AG04450 (cell line): ENCODE measurements at regions of chr12 and their contacts with region 1.

Region 1: DNA sequence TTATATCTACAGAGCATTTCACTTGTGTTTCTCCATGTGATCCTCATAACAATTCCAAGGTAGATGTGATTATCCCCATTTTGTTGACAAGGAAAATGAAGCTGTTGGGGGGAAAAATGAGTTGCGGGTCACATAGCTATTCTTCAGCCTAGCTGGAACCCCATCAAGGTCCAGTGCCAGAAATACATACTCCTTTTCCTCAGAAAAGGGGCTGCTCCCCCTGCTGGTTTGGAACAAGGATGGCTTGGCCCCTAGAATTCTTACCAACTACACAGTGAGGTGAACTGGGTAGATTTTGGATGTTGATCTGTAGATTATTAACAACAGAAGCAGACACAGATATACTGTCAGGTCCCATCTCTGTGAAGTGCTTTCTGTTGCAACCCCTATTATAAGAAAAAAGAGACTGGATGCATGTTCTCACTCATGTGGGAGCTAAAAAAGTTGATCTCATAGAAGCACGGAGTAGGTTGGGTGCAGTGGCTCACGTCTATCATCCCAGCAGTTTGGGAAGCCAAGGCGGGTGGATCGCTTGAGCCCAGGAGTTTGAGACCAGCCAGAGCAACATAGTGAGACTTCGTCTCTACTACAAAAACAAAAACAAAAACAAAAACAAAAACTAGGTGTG is 8.9 kb downstream of the IKZF4 start:
- DNase-seq: no peak
- H3K4me3 ChIP-seq: no peak overlapping the region
- H3K27ac ChIP-seq: no peak overlapping the region
- H3K27me3 ChIP-seq: no peaks in the 10 kb centered on the region
- CTCF ChIP-seq: peak; percentile 89

Region 2: DNA sequence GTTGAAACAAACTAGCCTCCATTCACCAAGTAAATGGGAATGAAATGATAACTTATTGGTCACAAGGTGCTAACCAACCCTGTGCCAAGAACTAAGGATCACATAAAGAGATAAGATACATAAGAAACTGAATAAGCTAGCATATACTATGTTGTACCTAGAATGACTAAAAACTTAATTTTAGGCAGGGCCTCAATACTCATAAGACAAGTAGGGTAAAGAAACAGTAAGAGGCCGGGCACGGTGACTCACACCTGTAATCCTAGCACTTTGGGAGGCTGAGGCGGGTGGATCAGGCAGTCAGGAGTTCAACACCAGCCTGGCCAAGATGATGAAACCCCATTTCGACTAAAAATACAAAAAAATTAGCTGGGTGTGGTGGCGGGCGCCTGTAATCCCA is 269.1 kb before region 1 on chr12:
- CTCF ChIA-PET with region 1: no interaction called
- POLR2A ChIA-PET with region 1: no interaction called
- DNase-seq: no peak
- H3K4me3 ChIP-seq: no peak overlapping the region
- H3K27ac ChIP-seq: no peak overlapping the region
- H3K27me3 ChIP-seq: no peaks in the 10 kb centered on the region
- CTCF ChIP-seq: no peak

Region 3: GRCh38 chr12:55780685-55781084 is 249.1 kb before region 1 on chr12:
- CTCF ChIA-PET with region 1: no interaction called
- POLR2A ChIA-PET with region 1: no interaction called
- DNase-seq: peak; percentile 7
- H3K4me3 ChIP-seq: no peak overlapping the region
- H3K27ac ChIP-seq: no peak overlapping the region
- H3K27me3 ChIP-seq: no peaks in the 10 kb centered on the region
- CTCF ChIP-seq: no peak

Region 4: GRCh38 chr12:55973598-55974307 is 56.0 kb before region 1 on chr12 and contains the start of gene RAB5B:
- CTCF ChIA-PET with region 1: interaction called, 14 read pairs
- POLR2A ChIA-PET with region 1: no interaction called
- DNase-seq: peak; percentile 100
- H3K4me3 ChIP-seq: peak within 1 kb of the TSS; percentile 94
- H3K27ac ChIP-seq: peak within 1 kb of the TSS; percentile 87
- H3K27me3 ChIP-seq: no peaks in the 10 kb centered on the region
- CTCF ChIP-seq: peak; percentile 29; the same call in 1 of the 2 replicates
- polyA plus RNA-seq, gene RAB5B: 136 and 157 TPM in 2 replicates

Region 5: DNA sequence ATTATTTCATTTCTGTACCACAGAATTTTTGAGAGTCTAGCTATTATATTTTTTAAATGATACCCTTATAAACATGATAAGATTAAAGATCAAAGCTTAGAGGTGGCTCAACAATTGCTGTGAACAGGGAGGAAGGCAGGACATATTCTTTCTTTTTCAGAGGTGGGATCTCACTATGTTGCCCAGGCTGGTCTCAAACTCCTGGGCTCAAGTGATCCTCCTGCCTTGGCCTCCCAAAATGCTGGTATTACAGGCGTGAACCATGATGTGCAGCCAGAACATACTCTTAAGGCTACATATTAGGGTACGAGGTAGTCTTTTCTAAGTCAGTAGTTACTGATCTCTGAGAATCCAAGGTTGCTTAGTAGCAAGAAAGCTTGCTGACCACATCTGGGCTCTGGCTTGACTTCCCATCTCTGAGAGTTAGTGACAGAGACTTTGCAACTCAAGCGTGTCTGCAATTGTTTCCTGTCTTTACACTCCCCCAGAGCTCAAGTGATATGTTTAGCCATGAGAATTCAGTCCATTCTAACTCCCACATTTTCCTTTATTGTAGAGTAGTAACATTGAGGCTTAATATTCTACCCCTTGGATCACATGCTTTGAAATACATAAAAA is 47.4 kb before region 1 on chr12:
- CTCF ChIA-PET with region 1: interaction called, 25 read pairs
- POLR2A ChIA-PET with region 1: no interaction called
- DNase-seq: no peak
- H3K4me3 ChIP-seq: no peak overlapping the region
- H3K27ac ChIP-seq: no peak overlapping the region
- H3K27me3 ChIP-seq: no peaks in the 10 kb centered on the region
- CTCF ChIP-seq: no peak

Region 6: DNA sequence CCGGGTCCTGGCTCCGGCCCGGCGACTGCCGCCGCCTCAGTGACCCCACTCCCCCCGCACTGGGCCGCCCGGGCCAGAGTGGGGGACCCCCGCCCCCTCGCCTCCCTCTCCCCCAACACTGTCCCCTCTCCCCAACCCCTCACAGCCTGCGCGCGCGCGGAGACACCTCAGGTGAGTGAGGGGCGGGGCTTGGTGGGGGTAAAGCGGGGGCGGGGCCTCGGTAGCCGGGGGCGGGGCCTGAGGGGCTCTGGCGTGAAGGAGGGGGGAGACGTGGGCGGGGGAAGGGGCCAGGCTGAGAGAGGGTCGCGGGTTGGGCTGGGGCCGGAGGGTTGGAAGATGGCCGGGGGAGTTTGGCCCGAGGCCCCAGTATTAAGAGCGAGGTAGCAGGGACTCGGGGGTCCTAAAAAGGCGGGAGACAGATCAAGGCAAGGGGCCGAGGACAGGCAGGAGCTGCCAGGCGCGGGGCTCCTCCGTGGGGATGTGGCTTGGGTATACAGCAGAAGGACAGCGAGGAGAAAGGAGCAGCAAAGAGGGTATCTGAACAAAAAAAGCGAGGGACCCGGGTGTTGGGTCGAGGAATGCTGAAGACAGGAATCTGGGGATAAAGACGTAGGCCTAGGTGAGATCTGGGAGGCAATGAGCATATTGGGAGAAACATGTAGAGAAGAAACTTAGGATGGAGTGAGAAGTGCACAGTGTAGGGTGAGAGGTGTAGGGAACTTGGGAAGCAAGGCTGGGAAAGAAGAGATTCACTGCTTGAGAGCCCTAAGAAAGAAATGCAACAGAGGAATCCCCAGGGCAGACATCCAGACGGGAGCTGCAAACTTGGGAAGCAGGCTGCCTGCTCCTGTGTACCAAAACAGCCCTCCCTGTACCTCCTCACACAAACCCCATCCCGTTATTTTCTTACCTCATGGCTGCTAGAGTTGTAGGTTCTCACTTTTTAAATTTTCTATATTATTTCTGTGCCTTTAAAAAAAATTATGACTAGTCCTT is 21.9 kb before region 1 on chr12:
- CTCF ChIA-PET with region 1: interaction called, 17 read pairs
- POLR2A ChIA-PET with region 1: no interaction called
- DNase-seq: no peak
- H3K4me3 ChIP-seq: peak overlapping the region; percentile 68
- H3K27ac ChIP-seq: no peak overlapping the region
- H3K27me3 ChIP-seq: no peaks in the 10 kb centered on the region
- CTCF ChIP-seq: no peak

Region 7: GRCh38 chr12:56014206-56014605 is 15.6 kb before region 1 on chr12:
- CTCF ChIA-PET with region 1: interaction called, 17 read pairs
- POLR2A ChIA-PET with region 1: no interaction called
- DNase-seq: no peak
- H3K4me3 ChIP-seq: no peak overlapping the region
- H3K27ac ChIP-seq: no peak overlapping the region
- H3K27me3 ChIP-seq: no peaks in the 10 kb centered on the region
- CTCF ChIP-seq: no peak

Region 8: GRCh38 chr12:56041552-56042429 is 12.0 kb after region 1 on chr12 and contains the start of gene RPS26:
- CTCF ChIA-PET with region 1: interaction called, 28 read pairs
- POLR2A ChIA-PET with region 1: interaction called, 4 read pairs
- DNase-seq: peak; percentile 99
- H3K4me3 ChIP-seq: peak within 1 kb of the TSS; percentile 92
- H3K27ac ChIP-seq: peak within 1 kb of the TSS; percentile 92
- H3K27me3 ChIP-seq: no peaks in the 10 kb centered on the region
- CTCF ChIP-seq: peak; percentile 46
- polyA plus RNA-seq, gene RPS26: 348 and 382 TPM in 2 replicates

Region 9: DNA sequence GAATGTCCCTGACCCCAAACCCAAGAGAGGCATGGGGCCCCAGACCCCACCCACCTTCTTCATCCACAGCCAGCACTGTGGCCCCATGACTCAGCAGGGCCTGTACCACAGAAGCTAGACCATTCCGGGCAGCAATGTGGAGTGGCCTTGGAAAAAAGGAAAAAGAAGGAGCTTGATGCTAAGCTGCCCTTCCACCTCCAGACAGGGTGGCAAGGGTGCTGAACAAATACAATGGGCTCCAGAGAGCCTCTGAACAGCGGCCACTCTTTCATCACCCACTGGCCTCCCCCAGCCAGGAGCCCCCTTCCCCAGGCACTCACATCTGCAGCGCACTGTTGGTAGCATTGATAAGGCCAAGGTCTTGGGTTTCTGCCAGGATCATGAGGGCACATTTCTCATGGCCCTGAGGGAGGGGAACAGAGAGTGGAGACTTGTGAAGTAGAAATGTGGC is 214.0 kb after region 1 on chr12:
- CTCF ChIA-PET with region 1: no interaction called
- POLR2A ChIA-PET with region 1: no interaction called
- DNase-seq: no peak
- H3K4me3 ChIP-seq: no peak overlapping the region
- H3K27ac ChIP-seq: no peak overlapping the region
- H3K27me3 ChIP-seq: no peaks in the 10 kb centered on the region
- CTCF ChIP-seq: no peak